ENCODE measurements at regions of chr14 and their contacts with region 1.

Region 1: DNA sequence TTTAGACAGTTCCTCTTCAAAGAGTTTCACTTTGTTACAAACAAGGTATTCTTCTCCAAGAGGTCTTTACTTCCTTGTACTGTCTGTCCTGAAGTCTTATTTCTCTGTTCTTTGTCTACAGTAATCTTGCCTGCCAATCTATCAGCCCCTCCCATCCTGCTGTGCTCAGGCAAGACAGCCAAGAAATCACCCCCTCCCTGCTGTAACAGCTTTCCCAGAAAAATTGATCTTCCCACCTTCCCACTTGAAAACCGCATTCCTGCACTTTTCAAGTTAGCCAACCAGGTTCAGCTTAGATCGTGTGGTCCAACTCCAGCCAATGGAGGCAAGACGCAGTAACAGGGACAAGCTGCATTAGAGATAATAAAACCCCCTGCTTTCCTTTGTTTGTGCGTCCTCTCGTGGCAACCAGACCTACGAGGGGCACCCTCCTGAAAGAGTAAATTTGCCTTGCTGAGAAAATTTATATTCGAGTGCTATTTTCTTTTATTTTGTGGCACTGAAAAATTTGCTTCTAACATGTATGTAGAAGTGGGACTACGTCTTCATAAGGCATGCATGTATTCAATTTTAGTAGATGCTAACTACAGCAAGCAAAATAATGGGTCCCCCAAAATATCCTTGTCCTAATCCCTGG is 46.5 kb upstream of the ESR2 start:
- DNase-seq: no peak
- ATAC-seq: no peak
- H3K4me3 ChIP-seq: no peak overlapping the region
- H3K27ac ChIP-seq: no peak overlapping the region
- H3K4me1 ChIP-seq: no peaks in the 10 kb centered on the region
- H3K27me3 ChIP-seq: no peaks in the 10 kb centered on the region
- CTCF ChIP-seq: no peak

Region 2: DNA sequence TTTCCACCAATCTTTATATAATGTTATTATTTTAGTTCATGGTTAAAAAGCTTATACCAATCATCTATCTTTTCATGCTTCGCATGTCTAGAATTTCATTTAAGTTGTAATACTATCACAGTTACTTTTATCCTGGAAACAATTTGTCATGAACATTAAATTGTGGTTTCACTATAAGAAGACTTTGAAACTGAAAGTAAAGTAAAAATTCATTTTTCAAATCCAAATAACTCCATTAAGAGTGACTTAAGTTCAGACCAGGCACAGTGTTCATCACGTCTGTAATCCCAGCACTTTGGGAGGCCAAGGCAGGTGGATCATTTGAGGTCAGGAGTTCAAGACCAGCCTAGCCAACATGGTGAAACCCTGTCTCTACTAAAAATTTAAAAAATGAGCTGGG is 58.9 kb before region 1 on chr14:
- intact Hi-C with region 1: no loop called
- DNase-seq: no peak
- ATAC-seq: no peak
- H3K4me3 ChIP-seq: no peak overlapping the region
- H3K27ac ChIP-seq: no peak overlapping the region
- H3K4me1 ChIP-seq: no peaks in the 10 kb centered on the region
- H3K27me3 ChIP-seq: no peaks in the 10 kb centered on the region
- CTCF ChIP-seq: no peak

Region 3: GRCh38 chr14:64387694-64388532 is 47.2 kb after region 1 on chr14 and contains the start of gene MTHFD1:
- intact Hi-C with region 1: loop called in 1 of 2 experiments (anchors 5 kb)
- DNase-seq: peak; percentile 99 to 100
- ATAC-seq: peak; percentile 91 to 95 (median 92)
- H3K4me3 ChIP-seq: peak within 1 kb of the TSS; percentile 89
- H3K27ac ChIP-seq: peak within 1 kb of the TSS; percentile 87
- H3K4me1 ChIP-seq: peaks cover 22% of the 10 kb centered on the region
- H3K27me3 ChIP-seq: no peaks in the 10 kb centered on the region
- CTCF ChIP-seq: no peak
- total RNA-seq, gene MTHFD1: 57.4 to 77.4 (median 67.0) TPM

Region 4: DNA sequence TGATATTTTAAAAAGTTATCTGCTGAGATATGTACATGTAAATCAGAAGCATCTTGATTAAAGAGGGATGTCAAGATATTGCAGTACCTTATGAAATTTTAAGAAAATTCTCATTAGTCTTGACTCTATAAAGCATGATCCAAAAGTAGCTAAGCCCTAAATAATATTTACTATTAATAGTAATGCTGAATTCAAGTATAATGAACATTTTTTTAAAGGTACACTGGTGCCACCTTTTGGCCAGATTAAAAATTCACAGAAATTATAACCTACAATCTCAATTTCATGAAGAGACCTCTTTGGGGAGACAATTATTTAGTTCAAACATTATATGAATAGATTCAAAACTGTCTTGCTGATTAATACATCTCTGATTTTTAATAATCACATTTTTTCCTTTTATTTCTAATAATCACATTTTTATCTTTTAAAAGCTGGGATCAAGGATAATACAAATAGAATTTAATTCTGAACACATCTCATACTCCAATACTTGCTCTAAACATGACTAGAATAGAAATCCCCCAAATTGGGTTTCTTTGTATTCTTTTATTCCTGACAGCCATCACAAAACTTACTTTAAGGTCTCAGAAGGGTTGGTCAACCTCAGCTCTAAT is 138.1 kb after region 1 on chr14:
- intact Hi-C with region 1: loop called in 1 of 2 experiments (anchors 10 kb)
- DNase-seq: no peak
- ATAC-seq: no peak
- H3K4me3 ChIP-seq: no peak overlapping the region
- H3K27ac ChIP-seq: no peak overlapping the region
- H3K4me1 ChIP-seq: no peaks in the 10 kb centered on the region
- H3K27me3 ChIP-seq: no peaks in the 10 kb centered on the region
- CTCF ChIP-seq: peak; percentile 32

Region 5: DNA sequence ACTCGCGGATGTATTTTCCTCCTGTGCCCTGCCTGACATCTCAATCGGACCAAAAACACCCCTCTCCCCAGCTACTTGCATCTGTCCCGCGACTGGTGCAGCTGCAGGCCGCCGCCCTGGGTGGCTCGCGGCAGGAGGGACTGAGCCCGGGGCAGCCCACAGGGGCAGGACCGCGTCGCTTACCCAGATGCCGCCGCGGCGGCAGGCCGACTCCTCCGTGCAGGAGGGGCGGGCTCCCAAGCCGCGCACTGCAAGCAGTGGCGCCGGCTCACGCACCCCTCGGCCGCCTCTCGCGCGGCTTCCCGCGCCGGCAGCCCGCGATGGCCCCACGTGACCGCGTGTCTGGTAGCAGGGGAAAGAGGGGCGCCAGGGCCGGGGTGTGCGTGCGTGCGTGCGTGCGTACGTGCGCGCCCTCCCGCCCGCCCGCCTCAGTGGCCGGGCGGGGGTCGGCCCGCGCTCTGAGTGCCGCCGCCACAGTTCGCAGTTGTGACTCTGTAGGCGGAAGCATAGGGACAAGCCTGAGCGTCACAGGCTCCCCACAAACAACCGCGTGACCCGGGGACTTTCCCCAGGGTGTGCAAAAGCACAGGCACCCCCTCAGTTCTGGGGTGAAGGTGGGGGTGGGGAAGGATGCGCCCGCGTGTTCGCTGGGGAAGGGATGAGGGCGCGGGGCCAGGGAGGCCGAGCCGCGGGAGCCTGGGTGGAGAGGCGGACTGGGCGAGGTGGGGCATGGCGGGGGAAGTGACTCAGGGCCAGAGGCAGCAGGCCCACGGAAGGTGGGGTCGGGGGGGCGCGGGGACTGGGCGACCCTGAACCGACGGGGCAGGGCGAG is 163.0 kb after region 1 on chr14 and contains the start of gene ZBTB25:
- intact Hi-C with region 1: loop called in 1 of 2 experiments (anchors 10 kb)
- DNase-seq: peak; percentile 93 to 96
- ATAC-seq: peak; percentile 74 to 79 (median 76)
- H3K4me3 ChIP-seq: peak within 1 kb of the TSS; percentile 93
- H3K27ac ChIP-seq: peak within 1 kb of the TSS; percentile 99
- H3K4me1 ChIP-seq: peaks cover 59% of the 10 kb centered on the region
- H3K27me3 ChIP-seq: no peaks in the 10 kb centered on the region
- CTCF ChIP-seq: no peak
- total RNA-seq, gene ZBTB25: 10.2 to 12.7 (median 11.8) TPM

Region 6: GRCh38 chr14:64566651-64567122 is 226.0 kb after region 1 on chr14:
- intact Hi-C with region 1: no loop called
- DNase-seq: no peak
- ATAC-seq: no peak
- H3K4me3 ChIP-seq: no peak overlapping the region
- H3K27ac ChIP-seq: peak overlapping the region; percentile 52
- H3K4me1 ChIP-seq: peaks cover 35% of the 10 kb centered on the region
- H3K27me3 ChIP-seq: no peaks in the 10 kb centered on the region
- CTCF ChIP-seq: no peak

Region 7: DNA sequence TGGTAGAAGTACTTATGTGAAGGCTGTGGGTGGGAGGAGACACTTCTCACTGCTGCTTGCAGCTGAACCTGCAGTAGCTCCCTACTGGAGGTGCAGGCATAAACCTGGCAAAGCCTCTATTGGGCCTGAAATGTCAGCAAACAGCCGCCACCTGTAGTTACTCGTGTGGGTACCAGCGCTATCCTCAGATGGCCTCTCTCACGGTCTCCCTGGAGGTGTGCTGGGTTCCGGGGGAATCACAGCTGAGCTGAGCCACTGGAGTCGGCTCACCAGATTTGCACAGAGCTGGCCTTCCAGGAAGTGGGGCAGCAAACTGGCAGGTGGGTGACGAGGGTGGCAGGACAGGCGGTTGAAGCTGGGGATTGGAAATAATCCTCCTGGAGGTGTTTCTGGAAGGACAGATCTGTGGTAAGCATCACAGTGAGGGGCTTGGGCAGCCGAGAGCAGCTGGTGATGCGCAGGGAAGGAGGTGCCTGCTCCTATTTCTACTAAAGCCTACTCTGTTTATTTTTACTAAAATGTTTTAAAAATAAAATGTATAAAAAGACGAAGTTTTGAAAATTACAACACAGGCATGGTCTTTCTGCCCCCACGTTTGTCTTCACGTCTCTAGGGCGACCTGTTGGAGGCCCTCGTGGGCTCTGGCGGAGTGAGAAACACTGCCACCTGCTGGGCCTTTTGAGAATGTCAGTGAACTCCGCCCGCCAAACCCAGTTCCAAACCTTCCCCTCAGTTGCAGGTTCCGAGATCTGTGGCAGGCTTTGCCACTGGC is 295.7 kb after region 1 on chr14:
- intact Hi-C with region 1: loop called (anchors 5 to 10 kb)
- DNase-seq: peak; percentile 51 to 77
- ATAC-seq: peak; percentile 90 to 97 (median 92)
- H3K4me3 ChIP-seq: no peak overlapping the region
- H3K27ac ChIP-seq: no peak overlapping the region
- H3K4me1 ChIP-seq: no peaks in the 10 kb centered on the region
- H3K27me3 ChIP-seq: no peaks in the 10 kb centered on the region
- CTCF ChIP-seq: peak; percentile 93